ENCODE measurements at regions of chr12 and their contacts with region 1.

Region 1: GRCh38 chr12:55647027-55647426 is 10.3 kb downstream of the OR10P1 start:
- DNase-seq: no peak
- H3K4me3 ChIP-seq: no peak overlapping the region
- CTCF ChIP-seq: no peak

Region 2: DNA sequence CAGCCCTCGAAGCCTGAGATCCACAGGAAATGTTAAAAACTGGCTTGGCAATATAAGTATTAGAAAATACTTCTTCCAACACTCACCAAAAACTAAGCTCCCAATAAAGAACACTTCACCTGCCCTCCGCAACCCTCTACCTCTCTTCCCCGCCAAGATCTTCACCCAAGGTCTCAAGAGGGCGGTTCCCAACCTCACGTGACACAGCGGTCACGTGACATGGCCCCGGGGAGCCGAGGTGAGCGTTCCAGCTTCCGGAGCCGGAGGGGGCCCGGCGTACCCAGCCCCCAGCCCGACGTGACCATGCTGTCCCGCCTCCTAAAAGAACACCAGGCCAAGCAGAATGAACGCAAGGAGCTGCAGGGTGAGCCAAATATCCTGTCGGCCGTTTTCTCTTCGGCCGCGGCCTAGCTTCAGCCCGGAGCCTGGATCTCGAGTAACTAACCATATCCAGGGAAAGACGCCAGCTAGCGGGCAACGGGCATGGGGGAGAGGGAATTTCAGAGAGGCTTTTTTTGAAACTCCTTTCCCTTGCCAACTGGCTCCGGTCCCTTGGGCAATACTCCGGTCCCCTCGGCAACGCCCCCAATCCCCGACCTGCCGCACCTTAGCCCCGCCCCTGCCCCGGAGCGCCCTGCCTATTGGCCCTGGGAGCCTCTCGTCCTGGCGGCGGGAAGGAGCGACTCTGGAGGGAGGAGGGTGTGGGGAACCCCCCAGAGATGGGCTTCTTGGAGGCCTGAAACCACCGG is 69.0 kb after region 1 on chr12 and contains the start of gene BLOC1S1:
- CTCF ChIA-PET with region 1: interaction called, 15 read pairs
- POLR2A ChIA-PET with region 1: no interaction called
- DNase-seq: no peak
- H3K4me3 ChIP-seq: peak within 1 kb of the TSS; percentile 81
- CTCF ChIP-seq: no peak

Region 3: DNA sequence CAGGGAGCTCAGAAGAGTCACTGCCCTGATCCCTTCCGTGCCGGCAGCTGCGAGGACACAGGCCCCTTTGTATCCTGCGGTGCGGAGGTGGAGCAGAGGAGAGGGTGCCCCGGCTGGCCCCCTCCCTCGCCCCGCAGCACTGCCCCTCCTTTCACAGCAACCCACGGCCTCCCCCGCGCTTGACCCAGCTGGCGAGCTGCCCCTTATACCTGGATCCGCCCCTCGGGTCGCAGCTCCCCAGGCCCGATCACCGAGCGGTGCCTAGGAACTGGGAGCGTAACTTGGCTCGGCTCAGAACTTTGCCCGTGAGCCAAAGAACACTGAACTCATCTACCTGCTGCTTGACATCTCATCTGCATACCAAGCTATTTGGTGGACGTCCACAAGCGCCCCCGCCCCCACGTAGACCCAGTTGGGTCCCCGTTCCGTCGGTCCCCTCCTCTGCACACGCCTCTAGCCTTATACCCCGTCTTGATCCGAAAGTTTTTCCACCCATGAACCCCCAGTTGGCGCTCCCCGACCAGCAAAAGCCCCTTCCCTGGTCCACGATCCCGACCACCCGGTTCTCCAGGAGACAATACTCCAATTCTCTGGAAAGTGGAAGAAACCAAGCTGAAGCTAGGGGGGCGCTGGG is 183.1 kb after region 1 on chr12:
- CTCF ChIA-PET with region 1: no interaction called
- POLR2A ChIA-PET with region 1: no interaction called
- DNase-seq: no peak
- H3K4me3 ChIP-seq: peak overlapping the region; percentile 78
- CTCF ChIP-seq: no peak

Measured in AG04449 (cell line).